ENCODE measurements at regions of chr1 and their contacts with region 1.

Region 1: GRCh38 chr1:89820422-89821321 is at the start of gene LRRC8D:
- DNase-seq: no peak
- ATAC-seq: peak; percentile 86
- H3K4me3 ChIP-seq: peak within 1 kb of the TSS; percentile 71
- H3K27ac ChIP-seq: peak within 1 kb of the TSS; percentile 71
- H3K4me1 ChIP-seq: peaks cover 18% of the 10 kb centered on the region
- H3K27me3 ChIP-seq: no peaks in the 10 kb centered on the region
- CTCF ChIP-seq: no peak
- EP300 ChIP-seq: no peak
- POLR2A ChIP-seq: peak; percentile 84
- RAD21 ChIP-seq: no peak
- polyA plus RNA-seq, gene LRRC8D: 5.6 to 6.4 TPM

Region 2: GRCh38 chr1:89598450-89599331 is 222.0 kb before region 1 on chr1:
- CTCF ChIA-PET with region 1: no interaction called
- POLR2A ChIA-PET with region 1: no interaction called
- RAD21 ChIA-PET with region 1: no interaction called
- SMC1A ChIA-PET with region 1: no interaction called
- in situ Hi-C with region 1: no loop called
- intact Hi-C with region 1: no loop called
- DNase-seq: no peak
- ATAC-seq: peak; percentile 88
- H3K4me3 ChIP-seq: no peak overlapping the region
- H3K27ac ChIP-seq: no peak overlapping the region
- H3K4me1 ChIP-seq: peaks cover 9% of the 10 kb centered on the region
- H3K27me3 ChIP-seq: no peaks in the 10 kb centered on the region
- CTCF ChIP-seq: peak; percentile 53 to 62 (median 56)
- EP300 ChIP-seq: no peak
- POLR2A ChIP-seq: no peak
- RAD21 ChIP-seq: peak; percentile 67

Region 3: GRCh38 chr1:89622895-89623294 is 197.8 kb before region 1 on chr1:
- CTCF ChIA-PET with region 1: no interaction called
- POLR2A ChIA-PET with region 1: no interaction called
- RAD21 ChIA-PET with region 1: no interaction called
- SMC1A ChIA-PET with region 1: no interaction called
- in situ Hi-C with region 1: no loop called
- intact Hi-C with region 1: no loop called
- DNase-seq: no peak
- ATAC-seq: no peak
- H3K4me3 ChIP-seq: no peak overlapping the region
- H3K27ac ChIP-seq: no peak overlapping the region
- H3K4me1 ChIP-seq: no peaks in the 10 kb centered on the region; the same call in 1 of the 2 replicates
- H3K27me3 ChIP-seq: no peaks in the 10 kb centered on the region
- CTCF ChIP-seq: peak in 1 of 3 experiments; percentile 17; a peak in 1 of 6 replicates
- EP300 ChIP-seq: no peak
- POLR2A ChIP-seq: no peak
- RAD21 ChIP-seq: peak; percentile 15; the same call in 1 of the 2 replicates

Region 4: GRCh38 chr1:89833183-89834082 is 12.8 kb after region 1 on chr1:
- CTCF ChIA-PET with region 1: interaction called, 19 read pairs
- POLR2A ChIA-PET with region 1: interaction called, 7 read pairs
- RAD21 ChIA-PET with region 1: interaction called, 3 read pairs
- SMC1A ChIA-PET with region 1: interaction called, 8 read pairs
- in situ Hi-C with region 1: no loop called
- intact Hi-C with region 1: no loop called
- DNase-seq: no peak
- ATAC-seq: no peak
- H3K4me3 ChIP-seq: no peak overlapping the region
- H3K27ac ChIP-seq: no peak overlapping the region
- H3K4me1 ChIP-seq: no peaks in the 10 kb centered on the region
- H3K27me3 ChIP-seq: no peaks in the 10 kb centered on the region
- CTCF ChIP-seq: no peak
- EP300 ChIP-seq: no peak
- POLR2A ChIP-seq: no peak
- RAD21 ChIP-seq: no peak

Region 5: DNA sequence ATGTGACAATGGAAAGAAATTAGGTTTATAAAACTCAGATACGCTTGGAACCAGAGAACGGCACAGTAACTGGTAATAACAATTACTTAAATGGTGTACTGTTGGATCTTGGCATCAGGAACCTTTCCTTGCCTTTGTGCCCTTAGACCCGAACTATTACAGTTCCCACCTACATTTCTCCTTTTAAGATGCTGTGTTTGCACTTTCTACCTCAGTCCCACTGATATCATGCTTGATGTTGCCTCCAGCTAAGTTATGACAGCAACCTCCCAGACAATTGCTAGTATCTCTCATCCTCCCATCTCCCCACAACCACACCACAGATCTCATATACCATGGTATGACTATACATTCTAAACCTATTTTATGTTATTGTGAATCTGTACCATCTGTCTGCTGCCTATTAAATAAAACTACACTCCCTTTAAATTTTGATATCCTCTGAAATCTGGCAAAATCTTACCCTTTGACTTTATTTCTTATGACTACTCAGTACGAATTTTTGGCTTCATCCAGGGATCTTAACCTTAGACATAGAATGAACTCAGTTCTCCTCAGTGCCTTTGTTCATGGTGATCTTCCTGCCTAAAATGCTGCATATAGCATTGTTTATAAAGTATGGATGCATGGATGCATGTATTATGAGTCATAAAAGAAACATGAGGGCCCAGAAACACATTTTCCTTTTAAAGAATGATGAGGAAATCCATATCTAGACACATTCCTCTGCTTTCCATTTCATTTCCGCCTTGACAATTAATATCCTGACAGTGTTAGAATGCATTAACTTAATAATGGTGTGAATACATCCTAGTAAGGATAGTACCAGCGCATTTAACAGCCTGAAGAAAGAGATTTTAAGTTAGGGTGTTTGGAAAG is 64.3 kb after region 1 on chr1:
- CTCF ChIA-PET with region 1: no interaction called
- POLR2A ChIA-PET with region 1: no interaction called
- RAD21 ChIA-PET with region 1: no interaction called
- SMC1A ChIA-PET with region 1: no interaction called
- in situ Hi-C with region 1: no loop called
- intact Hi-C with region 1: loop called (anchors 5 kb)
- DNase-seq: no peak
- ATAC-seq: no peak
- H3K4me3 ChIP-seq: no peak overlapping the region
- H3K27ac ChIP-seq: no peak overlapping the region
- H3K4me1 ChIP-seq: no peaks in the 10 kb centered on the region
- H3K27me3 ChIP-seq: no peaks in the 10 kb centered on the region
- CTCF ChIP-seq: no peak
- EP300 ChIP-seq: no peak
- POLR2A ChIP-seq: no peak
- RAD21 ChIP-seq: no peak

Region 6: DNA sequence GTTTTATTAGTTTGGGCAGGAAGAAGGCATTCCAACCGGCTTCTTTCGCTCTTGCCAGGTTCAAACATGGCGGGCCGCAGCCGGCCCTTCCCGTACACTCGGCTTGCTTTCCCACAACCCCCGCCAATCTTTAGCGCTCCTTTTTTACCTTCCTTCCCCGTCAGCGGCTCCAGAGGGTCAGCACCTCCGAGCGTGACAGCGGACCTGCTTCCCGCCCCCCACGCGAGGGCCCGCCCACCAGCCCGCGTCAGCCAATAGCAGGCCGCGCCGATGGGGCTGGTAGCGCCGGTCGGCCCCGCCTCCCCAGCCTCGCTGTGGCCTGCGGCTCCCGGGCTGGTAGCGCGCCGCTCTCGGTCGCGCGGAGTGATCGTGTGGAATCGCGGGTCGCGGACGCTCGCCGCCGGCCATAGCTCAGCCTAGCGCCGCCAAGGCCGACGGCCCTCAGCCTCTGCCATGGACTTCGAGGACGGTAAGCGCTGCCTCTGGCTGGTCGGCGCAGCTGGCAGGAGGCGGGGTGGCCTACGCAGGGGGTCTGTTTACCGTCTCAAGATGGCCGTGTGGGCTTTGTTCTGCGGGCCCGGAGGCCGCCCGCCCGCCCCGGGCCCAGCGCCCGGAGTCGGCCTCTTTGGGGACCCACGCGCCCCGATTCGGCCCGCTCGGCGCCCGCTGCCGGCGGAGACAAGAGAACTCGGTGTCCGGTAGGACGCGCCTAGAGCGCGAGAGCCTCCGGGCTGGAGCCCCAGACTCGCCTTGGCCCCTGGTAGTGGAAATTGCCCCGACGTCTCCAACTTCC is 174.3 kb after region 1 on chr1 and contains the start of gene ZNF326:
- CTCF ChIA-PET with region 1: no interaction called
- POLR2A ChIA-PET with region 1: no interaction called
- RAD21 ChIA-PET with region 1: no interaction called
- SMC1A ChIA-PET with region 1: no interaction called
- in situ Hi-C with region 1: no loop called
- intact Hi-C with region 1: loop called (anchors 2 kb)
- DNase-seq: peak; percentile 70
- ATAC-seq: peak; percentile 97
- H3K4me3 ChIP-seq: peak within 1 kb of the TSS; percentile 71
- H3K27ac ChIP-seq: peak within 1 kb of the TSS; percentile 89
- H3K4me1 ChIP-seq: no peaks in the 10 kb centered on the region
- H3K27me3 ChIP-seq: no peaks in the 10 kb centered on the region
- CTCF ChIP-seq: 0 out of 6 replicates have a peak, but pooled peaks of 1 of the 3 experiments have one; percentile 5
- EP300 ChIP-seq: no peak
- POLR2A ChIP-seq: peak; percentile 100
- RAD21 ChIP-seq: no peak
- polyA plus RNA-seq, gene ZNF326: 7.1 to 11.1 TPM

Region 7: DNA sequence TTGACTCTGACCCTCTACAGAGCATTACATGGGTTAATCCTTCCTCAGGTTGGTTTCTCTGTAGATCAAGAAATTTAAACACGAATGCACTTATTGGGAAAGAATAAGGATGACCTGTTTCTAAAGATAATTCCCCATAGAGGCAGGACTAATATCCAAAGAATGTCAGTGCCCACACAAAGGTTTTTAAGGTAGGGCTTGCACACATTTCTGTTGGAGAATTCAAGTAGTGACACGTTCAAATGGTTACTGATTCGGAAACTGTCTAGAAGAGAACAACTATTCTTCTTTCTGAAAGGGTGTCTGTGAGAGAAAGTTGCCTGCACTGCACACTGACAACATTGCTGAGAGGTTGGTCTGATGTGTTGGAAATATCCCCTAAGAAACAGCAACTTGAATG is 341.5 kb after region 1 on chr1:
- CTCF ChIA-PET with region 1: no interaction called
- POLR2A ChIA-PET with region 1: no interaction called
- RAD21 ChIA-PET with region 1: no interaction called
- SMC1A ChIA-PET with region 1: no interaction called
- in situ Hi-C with region 1: no loop called
- intact Hi-C with region 1: no loop called
- DNase-seq: no peak
- ATAC-seq: no peak
- H3K4me3 ChIP-seq: no peak overlapping the region
- H3K27ac ChIP-seq: no peak overlapping the region
- H3K4me1 ChIP-seq: no peaks in the 10 kb centered on the region
- H3K27me3 ChIP-seq: no peaks in the 10 kb centered on the region
- CTCF ChIP-seq: no peak
- EP300 ChIP-seq: no peak
- POLR2A ChIP-seq: no peak
- RAD21 ChIP-seq: no peak

Measured in GM12878 (cell line).